Breast epithelium (tissue), 4 donors: ENCODE measurements at regions of chr10 and their contacts with region 1.

Region 1: GRCh38 chr10:77609781-77610272 is 27.8 kb downstream of the KCNMA1 start:
- DNase-seq: no peak
- H3K4me3 ChIP-seq: no peak overlapping the region
- H3K27ac ChIP-seq: no peak overlapping the region
- H3K4me1 ChIP-seq: peaks cover 0 to 7% of the 10 kb centered on the region in 2 donors
- H3K27me3 ChIP-seq: no peaks in the 10 kb centered on the region
- CTCF ChIP-seq: no peak
- POLR2A ChIP-seq: no peak

Region 2: GRCh38 chr10:77580482-77580881 is 29.3 kb before region 1 on chr10:
- intact Hi-C with region 1: loop called (anchors 1 kb)
- DNase-seq: no peak
- H3K4me3 ChIP-seq: no peak overlapping the region
- H3K27ac ChIP-seq: no peak overlapping the region
- H3K4me1 ChIP-seq: no peaks in the 10 kb centered on the region
- H3K27me3 ChIP-seq: no peaks in the 10 kb centered on the region
- CTCF ChIP-seq: no peak
- POLR2A ChIP-seq: no peak